HCT116 (cell line): ENCODE measurements at regions of chr9 and their contacts with region 1.

Region 1: DNA sequence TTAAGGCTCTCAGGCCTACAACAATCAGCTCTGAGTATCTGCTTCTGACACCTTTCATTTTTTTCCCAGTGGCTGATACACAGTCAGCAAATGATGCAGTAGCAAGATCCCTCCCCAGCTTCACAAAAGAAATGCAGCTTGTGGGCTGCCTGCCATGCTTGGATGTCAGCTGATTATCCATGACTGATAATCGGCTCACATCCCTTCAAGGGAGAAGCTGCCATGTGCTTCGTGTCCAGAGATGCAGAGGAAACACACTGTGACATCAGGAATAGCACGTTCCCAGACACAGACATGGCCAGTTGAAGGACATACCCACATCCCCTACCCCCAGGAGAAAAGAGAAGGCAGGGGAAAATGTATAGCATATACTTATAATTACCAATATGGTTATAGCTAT is 27.9 kb downstream of the TMEM215 start:
- DNase-seq: no peak
- ATAC-seq: no peak
- H3K4me3 ChIP-seq: no peak overlapping the region
- H3K27ac ChIP-seq: no peak overlapping the region
- H3K4me1 ChIP-seq: no peaks in the 10 kb centered on the region
- H3K27me3 ChIP-seq: peaks cover 6% of the 10 kb centered on the region; the same call in 1 of the 2 replicates
- CTCF ChIP-seq: no peak
- POLR2A ChIP-seq: no peak
- RAD21 ChIP-seq: no peak

Region 2: DNA sequence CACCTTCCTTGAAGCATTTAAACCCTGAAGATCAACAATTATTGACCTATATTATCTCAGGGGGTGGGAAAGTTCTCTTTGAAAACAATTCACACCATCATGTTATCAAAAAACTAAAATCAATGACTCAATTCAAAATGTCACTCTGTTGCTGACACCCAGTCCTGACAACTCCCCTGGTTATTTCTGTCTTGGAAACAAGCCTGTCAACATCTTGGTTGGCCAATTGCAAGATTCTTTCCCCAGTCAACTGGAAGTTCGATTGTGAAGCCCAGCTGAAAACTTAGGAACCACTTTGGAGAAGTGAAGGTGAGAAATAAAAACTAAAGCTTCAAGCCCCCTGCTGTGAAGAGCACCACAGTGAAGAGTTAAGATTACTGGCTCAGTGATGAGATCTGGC is 18.1 kb after region 1 on chr9:
- CTCF ChIA-PET with region 1: no interaction called
- POLR2A ChIA-PET with region 1: no interaction called
- RAD21 ChIA-PET with region 1: no interaction called
- intact Hi-C with region 1: loop called (anchors 2 kb)
- DNase-seq: no peak
- ATAC-seq: no peak
- H3K4me3 ChIP-seq: no peak overlapping the region
- H3K27ac ChIP-seq: no peak overlapping the region
- H3K4me1 ChIP-seq: no peaks in the 10 kb centered on the region
- H3K27me3 ChIP-seq: peaks cover 56% of the 10 kb centered on the region
- CTCF ChIP-seq: no peak
- POLR2A ChIP-seq: no peak
- RAD21 ChIP-seq: no peak